Esophagus muscularis mucosa (tissue), 4 donors: ENCODE measurements at regions of chrX and their contacts with region 1.

Region 1: DNA sequence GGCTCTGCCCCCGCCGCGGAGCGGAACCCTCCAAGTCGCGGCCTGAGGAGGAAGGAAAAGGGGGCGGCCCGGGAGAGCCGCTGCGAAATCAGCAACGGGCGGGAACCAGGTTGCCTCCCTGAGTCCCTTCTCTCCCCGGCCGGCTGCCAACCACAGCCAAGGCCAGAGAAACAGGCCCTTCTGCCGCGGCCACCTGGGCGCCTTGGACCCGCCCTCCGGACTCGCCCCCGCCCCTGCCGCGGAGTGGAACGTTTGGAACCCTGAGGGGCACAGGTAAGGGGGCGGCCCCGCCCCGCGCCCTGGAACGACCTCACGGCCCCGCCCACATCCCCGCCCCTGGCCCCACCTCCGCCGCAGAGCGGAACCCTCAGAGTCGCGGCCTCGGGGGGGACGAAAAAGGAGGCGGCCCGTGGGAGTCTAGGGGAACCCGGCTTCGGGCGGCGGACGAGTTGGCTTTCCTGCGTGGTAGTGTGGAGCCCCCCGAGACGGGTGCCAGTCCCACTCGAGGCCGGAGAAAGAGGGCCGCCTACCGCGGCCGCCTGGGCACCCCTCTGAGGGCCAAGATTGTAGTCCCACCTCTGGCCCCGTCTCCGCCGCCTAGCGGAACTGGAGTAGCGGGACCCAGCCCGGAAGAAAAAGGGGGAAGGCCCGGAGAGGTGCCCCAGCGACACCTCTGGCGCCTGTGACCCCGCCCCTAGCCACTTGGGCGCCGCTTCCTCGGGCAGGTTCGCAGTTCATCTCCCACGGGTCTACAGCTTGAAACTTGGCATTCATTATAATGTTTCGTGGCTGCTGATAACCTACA is 669 bp upstream of the PHKA2 start:
- DNase-seq: peak; percentile 93
- H3K4me3 ChIP-seq: peak overlapping the region; percentile 70 to 85 (median 73)
- H3K27ac ChIP-seq: peak overlapping the region; percentile 88 to 91 (median 90)
- H3K4me1 ChIP-seq: peaks cover 8 to 18% (median 13%) of the 10 kb centered on the region in 4 donors
- H3K27me3 ChIP-seq: no peaks in the 10 kb centered on the region
- CTCF ChIP-seq: peak; percentile 35 to 64 (median 38)
- EP300 ChIP-seq: no peak
- POLR2A ChIP-seq: no peak

Region 2: GRCh38 chrX:18855919-18856644 is 128.5 kb before region 1 on chrX:
- intact Hi-C with region 1: no loop called
- DNase-seq: no peak
- H3K4me3 ChIP-seq: no peak overlapping the region
- H3K27ac ChIP-seq: no peak overlapping the region
- H3K4me1 ChIP-seq: no peaks in the 10 kb centered on the region
- H3K27me3 ChIP-seq: no peaks in the 10 kb centered on the region
- CTCF ChIP-seq: no peak
- EP300 ChIP-seq: no peak
- POLR2A ChIP-seq: no peak

Region 3: DNA sequence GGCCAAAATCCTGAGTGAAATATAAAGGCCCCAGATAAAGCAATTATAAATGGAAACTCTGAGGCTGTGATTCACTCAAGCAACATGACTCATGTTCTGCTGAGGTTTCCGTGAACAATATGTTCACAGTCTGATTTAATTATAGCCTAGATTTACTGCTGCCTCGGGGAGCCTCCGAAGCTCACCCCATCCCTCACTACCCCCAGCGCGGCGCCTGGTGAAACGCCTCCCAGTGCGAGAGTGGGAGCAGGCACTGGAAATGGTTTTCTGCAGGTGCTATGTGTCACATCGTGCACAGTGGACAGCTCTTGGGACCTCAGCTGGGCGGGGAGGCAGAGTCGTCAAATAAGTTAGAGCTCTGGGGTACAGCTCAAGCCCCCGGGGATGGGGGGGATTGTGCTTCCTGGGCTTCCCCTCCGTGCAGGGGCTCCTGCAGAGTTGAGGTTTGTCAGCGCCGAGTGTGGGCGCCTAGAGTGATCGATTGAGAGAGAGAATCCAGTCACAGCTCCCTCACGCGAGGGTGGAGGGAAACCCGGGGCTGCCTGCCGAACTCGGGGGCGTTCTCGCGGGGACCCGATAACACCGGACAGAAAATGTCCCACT is 111.3 kb before region 1 on chrX:
- intact Hi-C with region 1: no loop called
- DNase-seq: no peak
- H3K4me3 ChIP-seq: peak overlapping the region in 2 of 4 donors; percentile 16 to 17
- H3K27ac ChIP-seq: peak overlapping the region; percentile 59 to 71 (median 60)
- H3K4me1 ChIP-seq: peaks cover 21 to 30% (median 26%) of the 10 kb centered on the region in 4 donors
- H3K27me3 ChIP-seq: no peaks in the 10 kb centered on the region
- CTCF ChIP-seq: no peak
- EP300 ChIP-seq: no peak
- POLR2A ChIP-seq: no peak

Region 4: DNA sequence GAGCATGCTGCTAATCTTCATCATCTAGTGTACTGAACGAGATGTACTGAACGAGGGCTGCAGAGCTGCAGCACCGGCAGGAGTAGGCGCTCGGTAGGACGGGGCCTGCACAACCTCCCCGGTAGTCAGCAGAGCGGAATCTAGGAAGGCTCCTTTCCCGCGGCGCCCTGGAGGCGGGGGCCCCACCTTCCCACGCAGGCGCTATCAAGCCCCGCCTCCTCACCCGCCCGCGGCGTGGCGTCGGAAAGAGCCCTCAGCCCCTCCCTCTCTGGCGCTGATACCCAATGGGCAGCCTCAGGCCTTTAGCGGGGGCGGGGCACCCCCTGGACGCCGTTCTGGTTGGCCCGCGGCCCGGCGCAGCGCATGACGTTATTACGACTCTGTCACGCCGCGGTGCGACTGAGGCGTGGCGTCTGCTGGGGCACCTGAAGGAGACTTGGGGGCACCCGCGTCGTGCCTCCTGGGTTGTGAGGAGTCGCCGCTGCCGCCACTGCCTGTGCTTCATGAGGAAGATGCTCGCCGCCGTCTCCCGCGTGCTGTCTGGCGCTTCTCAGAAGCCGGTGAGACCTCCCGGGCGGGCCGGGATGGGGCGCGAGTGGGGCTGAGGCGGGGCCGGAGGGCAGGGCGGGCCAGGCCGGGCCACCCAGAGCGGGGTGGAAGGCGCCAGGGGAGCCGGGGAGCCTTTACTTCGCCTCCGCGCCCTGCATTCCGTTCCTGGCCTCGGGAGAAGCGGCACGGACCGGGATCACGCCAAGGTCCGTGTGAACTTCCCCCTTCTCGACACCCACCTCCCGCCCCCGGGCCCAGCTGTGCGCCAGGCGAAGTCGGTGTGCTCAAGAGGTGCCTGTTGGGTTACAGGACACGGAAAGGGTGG is 359.2 kb after region 1 on chrX and contains the start of gene PDHA1:
- intact Hi-C with region 1: loop called (anchors 10 kb)
- DNase-seq: peak; percentile 96
- H3K4me3 ChIP-seq: peak within 1 kb of the TSS; percentile 68 to 78 (median 72)
- H3K27ac ChIP-seq: peak within 1 kb of the TSS; percentile 91 to 96 (median 94)
- H3K4me1 ChIP-seq: peaks cover 9 to 40% (median 30%) of the 10 kb centered on the region in 4 donors
- H3K27me3 ChIP-seq: no peaks in the 10 kb centered on the region
- CTCF ChIP-seq: no peak
- EP300 ChIP-seq: no peak
- POLR2A ChIP-seq: peak; percentile 66
- total RNA-seq, gene PDHA1: 45.7 to 137 (median 78.8) TPM